ENCODE measurements at regions of chr11 and their contacts with region 1.

Region 1: DNA sequence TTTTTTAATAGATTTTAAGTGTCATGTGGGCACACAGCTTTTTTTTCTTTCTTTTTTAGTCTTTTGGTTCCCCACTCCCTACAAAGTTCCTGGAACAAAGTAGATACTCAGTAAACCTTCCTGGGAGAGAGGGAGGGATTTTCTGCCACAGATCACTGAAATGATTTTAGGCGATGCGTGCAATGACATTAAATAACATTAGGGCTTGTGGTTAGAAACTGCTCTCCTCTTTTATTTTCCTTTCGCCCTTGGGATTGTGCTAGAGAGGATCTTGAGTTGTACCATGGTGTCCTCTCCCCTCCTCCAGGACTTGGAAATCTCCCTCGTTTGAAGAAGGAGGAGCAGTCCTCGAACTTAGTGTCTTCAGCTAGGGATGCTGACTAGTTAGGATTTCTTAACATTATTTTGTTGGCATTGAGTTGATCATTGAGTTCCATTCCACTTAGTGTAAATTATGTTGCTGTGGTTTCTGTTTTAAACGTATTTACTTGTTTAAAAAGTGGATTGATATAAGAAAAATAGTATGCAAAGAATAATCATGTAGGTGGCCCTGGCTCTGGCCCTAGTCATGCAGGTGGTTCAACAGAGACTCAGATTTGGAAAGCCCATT is 88.4 kb downstream of the TRAF6 start:
- DNase-seq: no peak
- ATAC-seq: no peak
- H3K4me3 Mint-ChIP-seq: peak overlapping the region; percentile 28
- H3K27ac Mint-ChIP-seq: peak overlapping the region; percentile 83
- H3K4me1 Mint-ChIP-seq: peaks cover 38% of the 10 kb centered on the region
- H3K27me3 Mint-ChIP-seq: peaks cover 3% of the 10 kb centered on the region
- CTCF ChIP-seq: no peak

Region 2: GRCh38 chr11:36385121-36385970 is 36.3 kb before region 1 on chr11:
- CTCF ChIA-PET with region 1: interaction called, 5 read pairs
- POLR2A ChIA-PET with region 1: interaction called, 4 read pairs
- intact Hi-C with region 1: loop called (anchors 5 kb)
- DNase-seq: peak; percentile 37
- ATAC-seq: peak; percentile 68
- H3K4me3 Mint-ChIP-seq: no peak overlapping the region
- H3K27ac Mint-ChIP-seq: peak overlapping the region; percentile 21
- H3K4me1 Mint-ChIP-seq: peaks cover 26% of the 10 kb centered on the region
- H3K27me3 Mint-ChIP-seq: peaks cover 5% of the 10 kb centered on the region
- CTCF ChIP-seq: no peak

Region 3: GRCh38 chr11:36411202-36411640 is 10.4 kb before region 1 on chr11:
- CTCF ChIA-PET with region 1: interaction called, 4 read pairs
- POLR2A ChIA-PET with region 1: interaction called, 14 read pairs
- intact Hi-C with region 1: no loop called
- DNase-seq: peak; percentile 24
- ATAC-seq: no peak
- H3K4me3 Mint-ChIP-seq: no peak overlapping the region
- H3K27ac Mint-ChIP-seq: peak overlapping the region; percentile 65
- H3K4me1 Mint-ChIP-seq: peaks cover 54% of the 10 kb centered on the region
- H3K27me3 Mint-ChIP-seq: no peaks in the 10 kb centered on the region
- CTCF ChIP-seq: no peak